ENCODE measurements at regions of chr3 and their contacts with region 1.

Region 1: DNA sequence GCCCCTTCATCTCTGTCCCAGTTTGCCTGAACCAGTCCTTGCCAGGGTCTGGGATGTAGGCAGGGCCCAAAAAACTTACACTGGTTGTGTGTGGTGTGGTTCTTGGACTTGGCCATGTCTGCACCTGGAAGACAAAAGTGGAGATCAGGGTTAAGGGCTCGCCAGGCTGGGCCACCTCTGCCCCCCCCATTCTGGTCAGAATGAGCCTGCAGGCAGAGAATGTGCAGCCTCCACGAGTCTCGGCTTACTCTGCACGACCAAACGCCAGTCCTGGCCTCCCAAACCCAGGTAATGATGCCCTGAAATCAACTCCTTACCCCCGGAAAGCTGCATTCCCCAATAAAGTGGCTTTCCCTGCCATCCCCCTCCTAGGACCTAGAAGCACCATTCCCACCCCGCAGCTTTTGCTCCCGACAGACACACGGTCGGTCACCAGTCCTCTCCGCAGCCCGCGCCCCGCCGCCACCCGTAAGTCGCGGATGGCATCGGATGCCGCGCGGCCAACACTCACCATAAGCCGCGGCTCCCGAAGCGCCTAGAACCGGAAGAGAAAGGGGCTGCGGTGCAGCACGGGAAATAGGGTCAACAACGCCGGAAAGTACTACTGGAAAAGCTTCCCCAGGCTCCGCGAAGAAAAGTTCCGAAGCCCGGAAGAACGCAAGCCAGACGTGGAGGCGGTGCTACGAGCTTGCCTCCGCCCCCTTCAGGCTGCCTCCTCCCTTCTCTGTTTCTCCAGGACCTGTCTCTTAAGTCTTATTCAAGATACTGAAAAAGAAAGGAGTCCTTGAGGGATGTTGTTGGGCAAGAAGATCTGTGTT is at the start of gene RPL29:
- DNase-seq: peak; percentile 96
- H3K4me3 ChIP-seq: peak within 1 kb of the TSS; percentile 67 to 96 (median 91)
- H3K27ac ChIP-seq: peak within 1 kb of the TSS; percentile 89
- H3K4me1 ChIP-seq: peaks cover 19% of the 10 kb centered on the region
- H3K27me3 ChIP-seq: no peaks in the 10 kb centered on the region
- CTCF ChIP-seq: no peak
- POLR2A ChIP-seq: peak; percentile 97
- total RNA-seq, gene RPL29: 1,127 and 1,236 TPM in 2 replicates

Region 2: DNA sequence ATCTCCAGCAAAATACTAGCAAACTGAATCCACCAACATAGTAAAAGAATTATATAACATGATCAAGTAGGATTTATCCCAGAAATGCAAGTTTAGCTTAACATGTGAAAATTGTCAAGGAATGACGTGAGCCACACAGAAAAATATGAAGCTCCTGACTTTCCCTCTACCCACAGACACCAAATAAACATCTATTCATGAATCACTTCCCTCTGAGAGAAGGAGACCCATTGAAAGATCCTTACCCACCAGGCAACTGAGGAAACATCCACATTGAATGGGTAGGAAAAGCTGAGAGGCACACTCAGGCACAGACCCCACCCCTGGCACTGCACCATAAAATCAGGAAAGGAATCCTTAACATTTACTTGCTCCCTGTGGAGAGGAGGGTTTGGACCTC is 712.6 kb before region 1 on chr3:
- CTCF ChIA-PET with region 1: no interaction called
- POLR2A ChIA-PET with region 1: no interaction called
- dilution Hi-C with region 1: no loop called
- intact Hi-C with region 1: no loop called
- DNase-seq: no peak
- H3K4me3 ChIP-seq: no peak overlapping the region
- H3K27ac ChIP-seq: no peak overlapping the region
- H3K4me1 ChIP-seq: no peaks in the 10 kb centered on the region
- H3K27me3 ChIP-seq: no peaks in the 10 kb centered on the region
- CTCF ChIP-seq: no peak
- POLR2A ChIP-seq: no peak

Region 3: GRCh38 chr3:51581529-51581928 is 414.0 kb before region 1 on chr3:
- CTCF ChIA-PET with region 1: no interaction called
- POLR2A ChIA-PET with region 1: no interaction called
- dilution Hi-C with region 1: no loop called
- intact Hi-C with region 1: no loop called
- DNase-seq: no peak
- H3K4me3 ChIP-seq: no peak overlapping the region
- H3K27ac ChIP-seq: no peak overlapping the region
- H3K4me1 ChIP-seq: peaks cover 4% of the 10 kb centered on the region
- H3K27me3 ChIP-seq: no peaks in the 10 kb centered on the region
- CTCF ChIP-seq: no peak
- POLR2A ChIP-seq: no peak

Region 4: DNA sequence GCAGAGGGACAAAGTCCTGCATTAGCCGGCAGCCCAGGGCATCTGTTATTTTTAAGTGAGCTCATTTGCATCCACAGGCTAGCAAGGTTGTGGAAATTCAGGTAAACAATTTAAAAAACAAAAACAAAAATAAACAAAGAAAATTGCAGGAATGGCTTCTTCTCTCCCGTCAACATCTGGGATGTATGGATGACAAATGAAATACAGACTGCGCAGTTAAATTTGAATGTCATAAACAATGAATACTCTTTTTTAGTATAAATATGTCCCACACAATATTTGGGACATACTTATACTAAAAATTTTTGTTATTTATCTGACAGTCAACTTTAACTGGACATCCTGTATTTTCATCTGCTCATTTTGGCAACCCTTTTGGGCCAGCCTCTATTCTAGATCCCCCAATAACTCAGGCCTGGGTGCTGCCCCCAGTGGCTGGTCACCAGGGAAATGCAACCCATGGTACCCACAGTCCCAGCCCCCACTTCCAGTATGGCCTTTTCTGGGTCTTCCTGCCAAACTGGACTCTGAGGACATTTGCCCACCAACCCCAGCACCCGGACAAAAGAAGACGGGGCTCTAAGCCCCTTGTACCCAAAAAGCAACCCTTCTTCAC is 276.0 kb before region 1 on chr3:
- CTCF ChIA-PET with region 1: no interaction called
- POLR2A ChIA-PET with region 1: no interaction called
- dilution Hi-C with region 1: no loop called
- intact Hi-C with region 1: no loop called
- DNase-seq: no peak
- H3K4me3 ChIP-seq: no peak overlapping the region
- H3K27ac ChIP-seq: no peak overlapping the region
- H3K4me1 ChIP-seq: no peaks in the 10 kb centered on the region
- H3K27me3 ChIP-seq: no peaks in the 10 kb centered on the region
- CTCF ChIP-seq: peak in 1 of 2 donors; percentile 8
- POLR2A ChIP-seq: no peak

Region 5: DNA sequence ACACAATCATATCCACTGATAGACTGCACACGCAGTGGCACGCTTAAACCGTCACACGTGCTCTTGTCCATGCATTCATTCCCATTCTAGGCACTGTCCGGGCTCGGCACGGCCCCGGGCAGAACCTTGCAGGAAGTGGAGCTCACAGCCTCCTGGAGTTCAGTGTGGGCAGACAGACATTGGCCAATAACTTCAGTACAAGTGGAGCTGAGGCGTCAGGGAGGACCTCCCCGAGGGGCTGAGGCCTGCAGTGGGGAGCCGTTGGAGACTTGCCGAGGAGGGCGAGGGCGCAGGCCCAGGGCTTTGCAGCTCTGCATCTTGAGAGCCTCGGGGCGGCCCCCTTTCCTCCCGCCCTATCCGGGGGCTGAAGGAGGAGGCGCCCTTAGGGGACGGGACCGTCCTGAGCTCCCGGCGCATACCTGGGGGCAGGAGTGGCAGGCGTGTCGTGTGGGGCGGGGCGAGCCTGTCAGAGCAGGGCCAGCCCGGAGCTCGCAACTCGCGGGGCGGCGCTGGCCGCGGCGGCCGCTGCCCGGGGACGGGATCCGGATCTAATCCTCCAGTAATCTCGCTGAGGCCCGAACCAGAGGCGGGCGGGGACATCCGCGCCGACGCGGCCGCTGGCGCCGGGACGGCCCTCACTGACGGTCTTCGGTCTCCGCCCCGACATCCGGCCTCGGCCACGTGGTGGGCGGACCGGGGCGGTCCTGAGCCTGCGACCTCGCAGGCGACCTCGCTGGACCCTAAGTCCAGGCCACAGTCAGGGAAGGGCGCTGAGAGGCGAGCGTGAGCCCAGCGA is 12.6 kb before region 1 on chr3 and contains the start of gene ACY1:
- CTCF ChIA-PET with region 1: interaction called, 13 read pairs
- POLR2A ChIA-PET with region 1: interaction called, 15 read pairs
- dilution Hi-C with region 1: no loop called
- intact Hi-C with region 1: loop called (anchors 1 kb)
- DNase-seq: peak; percentile 87
- H3K4me3 ChIP-seq: peak within 1 kb of the TSS; percentile 28 to 48 (median 39)
- H3K27ac ChIP-seq: peak within 1 kb of the TSS; percentile 39
- H3K4me1 ChIP-seq: peaks cover 14% of the 10 kb centered on the region
- H3K27me3 ChIP-seq: no peaks in the 10 kb centered on the region
- CTCF ChIP-seq: no peak
- POLR2A ChIP-seq: peak; percentile 65
- total RNA-seq, gene ACY1: 12.3 and 13.4 TPM in 2 replicates

Region 6: GRCh38 chr3:52144034-52144795 is 148.7 kb after region 1 on chr3:
- CTCF ChIA-PET with region 1: interaction called, 139 read pairs
- POLR2A ChIA-PET with region 1: no interaction called
- dilution Hi-C with region 1: loop called (anchors 10 kb)
- intact Hi-C with region 1: no loop called
- DNase-seq: peak; percentile 63
- H3K4me3 ChIP-seq: no peak overlapping the region
- H3K27ac ChIP-seq: no peak overlapping the region
- H3K4me1 ChIP-seq: no peaks in the 10 kb centered on the region
- H3K27me3 ChIP-seq: no peaks in the 10 kb centered on the region
- CTCF ChIP-seq: peak; percentile 93 to 94
- POLR2A ChIP-seq: no peak

Region 7: DNA sequence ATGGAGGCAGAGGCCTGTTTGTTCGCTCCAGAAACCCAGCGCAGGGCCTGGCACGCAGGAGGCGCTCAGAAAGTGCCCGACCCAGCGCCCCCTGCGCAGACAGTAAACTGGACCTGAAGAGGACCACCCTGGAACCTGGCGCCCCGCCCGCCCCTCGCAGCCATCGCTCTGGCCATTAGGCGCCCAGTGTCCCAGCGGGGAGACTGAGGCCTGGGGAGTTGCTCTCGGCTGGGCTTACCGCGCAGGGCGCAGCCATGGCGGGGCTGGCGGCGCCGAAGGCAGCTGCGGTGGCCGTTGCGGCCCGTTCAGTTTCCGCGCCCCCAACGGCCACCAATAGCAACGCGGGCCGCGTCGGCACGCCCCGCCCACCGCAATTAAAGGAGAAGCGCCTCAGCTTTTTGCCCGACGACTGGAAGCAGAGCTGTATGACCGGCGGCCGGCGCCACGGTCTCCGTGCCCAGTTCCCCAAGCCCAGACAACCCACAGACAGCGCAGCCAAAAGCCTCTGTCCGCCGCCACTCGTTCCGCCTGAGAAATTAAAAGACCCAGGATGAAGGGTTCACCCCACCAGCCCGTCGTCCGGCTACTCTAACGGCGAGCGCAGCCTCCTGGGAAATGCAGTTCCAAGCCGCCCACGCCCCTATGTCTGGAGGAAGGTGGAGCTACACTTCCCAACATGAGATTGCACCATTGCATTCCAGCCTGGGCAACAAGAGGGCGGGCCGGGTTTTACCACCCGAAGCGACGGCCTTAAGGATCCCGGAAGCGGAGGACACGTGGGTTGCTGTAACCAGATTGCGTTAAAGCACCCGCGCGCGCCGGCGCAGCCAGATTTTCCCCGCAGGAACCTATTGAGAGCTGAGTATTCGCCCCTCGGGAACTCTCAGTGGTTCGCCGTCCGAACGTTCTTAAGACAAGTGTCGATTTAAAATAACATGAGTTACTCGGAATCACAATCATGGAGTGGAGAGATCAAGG is 158.9 kb after region 1 on chr3 and contains the start of gene POC1A:
- CTCF ChIA-PET with region 1: interaction called, 5 read pairs
- POLR2A ChIA-PET with region 1: interaction called, 14 read pairs
- dilution Hi-C with region 1: loop called (anchors 10 kb)
- intact Hi-C with region 1: no loop called
- DNase-seq: peak; percentile 97
- H3K4me3 ChIP-seq: peak within 1 kb of the TSS; percentile 64 to 69 (median 65)
- H3K27ac ChIP-seq: peak within 1 kb of the TSS; percentile 58
- H3K4me1 ChIP-seq: peaks cover 14% of the 10 kb centered on the region
- H3K27me3 ChIP-seq: no peaks in the 10 kb centered on the region
- CTCF ChIP-seq: no peak
- POLR2A ChIP-seq: peak; percentile 64
- total RNA-seq, gene POC1A: 16.7 and 19.4 TPM in 2 replicates

Region 8: DNA sequence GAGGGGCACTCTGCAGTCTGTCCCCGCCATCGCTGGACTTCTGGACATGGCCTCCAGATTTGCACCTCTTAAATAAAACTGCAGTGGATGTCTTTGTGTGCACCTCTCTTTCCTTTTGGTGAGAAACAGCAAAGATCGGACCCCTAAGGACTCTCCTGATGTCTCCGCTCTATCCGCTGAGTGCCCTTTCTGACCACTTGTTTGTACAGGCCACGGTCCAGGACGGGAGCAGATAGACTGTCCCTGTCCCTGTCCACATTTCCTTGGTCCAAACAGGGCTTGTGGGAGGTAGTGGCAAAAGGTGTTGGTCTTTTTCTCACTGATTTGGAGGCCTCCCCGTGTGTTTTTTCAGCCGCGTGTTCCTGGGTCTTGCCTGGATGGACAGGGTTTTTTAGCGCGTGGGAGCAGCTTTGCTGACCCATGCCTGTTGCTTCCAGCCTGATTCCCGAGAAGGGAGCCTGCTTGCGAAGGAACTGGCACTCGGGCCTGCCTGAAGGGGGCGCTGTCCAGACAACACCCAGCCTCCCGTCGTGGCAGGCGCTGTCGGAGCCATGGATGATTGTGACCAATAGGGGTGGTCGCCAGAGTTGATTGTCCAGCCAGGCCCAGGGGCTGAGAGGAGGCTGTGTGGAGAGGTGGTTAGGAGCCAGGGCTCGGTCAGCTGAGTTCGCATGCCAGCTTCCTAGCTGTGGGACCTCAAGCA is 486.4 kb after region 1 on chr3:
- CTCF ChIA-PET with region 1: no interaction called
- POLR2A ChIA-PET with region 1: no interaction called
- dilution Hi-C with region 1: no loop called
- intact Hi-C with region 1: no loop called
- DNase-seq: peak; percentile 29
- H3K4me3 ChIP-seq: no peak overlapping the region
- H3K27ac ChIP-seq: no peak overlapping the region
- H3K4me1 ChIP-seq: no peaks in the 10 kb centered on the region
- H3K27me3 ChIP-seq: no peaks in the 10 kb centered on the region
- CTCF ChIP-seq: peak; percentile 66 to 71
- POLR2A ChIP-seq: no peak